ENCODE measurements at regions of chr13 and their contacts with region 1.

Region 1: GRCh38 chr13:66624302-66624701 is 605.8 kb downstream of the PCDH9 start:
- DNase-seq: no peak
- H3K4me3 Mint-ChIP-seq: no peak overlapping the region
- H3K27ac Mint-ChIP-seq: no peak overlapping the region
- H3K4me1 Mint-ChIP-seq: no peaks in the 10 kb centered on the region
- H3K27me3 Mint-ChIP-seq: no peaks in the 10 kb centered on the region

Region 2: GRCh38 chr13:67224148-67224846 is 600.0 kb after region 1 on chr13:
- intact Hi-C with region 1: loop called (anchors 10 kb)
- DNase-seq: peak; percentile 76
- H3K4me3 Mint-ChIP-seq: no peak overlapping the region
- H3K27ac Mint-ChIP-seq: no peak overlapping the region
- H3K4me1 Mint-ChIP-seq: no peaks in the 10 kb centered on the region
- H3K27me3 Mint-ChIP-seq: peaks cover 11% of the 10 kb centered on the region

Measured in activated CD4-positive, alpha-beta T cell treated with anti-CD3 and anti-CD28 coated beads, Interleukin-2, amount 10 ng/mL, durations not matched to agents 24 days and 14 days (primary cell).